Activated CD4-positive, alpha-beta T cell treated with anti-CD3 and anti-CD28 coated beads for 36 hours (primary cell): ENCODE measurements at regions of chr16 and their contacts with region 1.

Region 1: GRCh38 chr16:22297114-22297878 is at the start of gene POLR3E:
- DNase-seq: peak; percentile 100
- ATAC-seq: peak; percentile 87
- H3K4me3 Mint-ChIP-seq: peak within 1 kb of the TSS; percentile 93
- H3K27ac Mint-ChIP-seq: peak within 1 kb of the TSS; percentile 96
- H3K4me1 Mint-ChIP-seq: peaks cover 38% of the 10 kb centered on the region
- H3K27me3 Mint-ChIP-seq: no peaks in the 10 kb centered on the region
- total RNA-seq, gene POLR3E: 70.9 to 87.4 TPM

Region 2: DNA sequence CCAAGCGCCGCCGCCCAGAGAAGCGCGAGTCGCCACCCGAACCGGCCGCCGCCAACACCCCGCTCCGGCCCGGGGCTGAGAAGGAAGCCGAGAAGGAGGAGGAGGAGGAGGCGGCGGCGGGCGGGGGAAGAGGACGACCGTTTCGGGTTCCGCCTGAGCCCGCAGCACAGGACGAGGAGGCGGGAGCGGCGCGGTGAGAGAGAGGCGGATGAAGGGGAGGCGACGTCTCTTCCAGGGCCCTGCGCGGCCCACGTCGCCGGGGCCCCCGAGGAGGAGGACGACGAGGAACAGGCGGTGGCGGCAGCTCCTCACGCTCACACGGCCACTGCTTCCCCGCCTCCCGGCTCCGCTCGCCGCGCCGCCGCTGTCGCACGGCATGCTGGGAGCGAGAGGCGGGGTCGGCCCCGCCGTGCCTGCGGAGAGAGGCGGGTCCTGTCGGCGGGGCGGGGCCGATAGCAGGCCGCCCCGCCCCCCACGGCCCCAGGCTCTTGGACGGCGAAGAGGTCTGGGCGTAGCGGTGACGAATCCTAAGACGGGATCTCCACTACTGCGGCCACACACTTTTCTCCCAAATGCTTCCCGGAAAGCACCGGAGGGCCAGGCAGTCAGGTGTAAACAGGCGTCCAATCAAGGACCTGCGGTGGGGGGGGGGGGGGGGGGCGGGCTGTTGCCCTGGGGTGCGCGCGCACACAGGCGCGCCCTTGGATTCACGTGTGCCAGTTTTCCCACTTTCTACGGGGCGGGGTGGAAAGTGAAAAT is 795.2 kb before region 1 on chr16:
- CTCF ChIA-PET with region 1: no interaction called
- POLR2A ChIA-PET with region 1: no interaction called
- intact Hi-C with region 1: loop called in 1 of 2 experiments (anchors 10 kb)
- DNase-seq: peak; percentile 97
- ATAC-seq: peak; percentile 75
- H3K4me3 Mint-ChIP-seq: peak overlapping the region; percentile 83
- H3K27ac Mint-ChIP-seq: peak overlapping the region; percentile 93
- H3K4me1 Mint-ChIP-seq: peaks cover 24% of the 10 kb centered on the region
- H3K27me3 Mint-ChIP-seq: no peaks in the 10 kb centered on the region

Region 3: GRCh38 chr16:21952793-21953540 is 344.3 kb before region 1 on chr16 and contains the start of gene UQCRC2:
- CTCF ChIA-PET with region 1: interaction called, 6 read pairs
- POLR2A ChIA-PET with region 1: no interaction called
- intact Hi-C with region 1: loop called in 1 of 2 experiments (anchors 1 kb)
- DNase-seq: peak; percentile 92
- ATAC-seq: peak; percentile 93
- H3K4me3 Mint-ChIP-seq: peak within 1 kb of the TSS; percentile 98
- H3K27ac Mint-ChIP-seq: peak within 1 kb of the TSS; percentile 100
- H3K4me1 Mint-ChIP-seq: peaks cover 58% of the 10 kb centered on the region
- H3K27me3 Mint-ChIP-seq: no peaks in the 10 kb centered on the region
- total RNA-seq, gene UQCRC2: 321 to 367 TPM

Region 4: DNA sequence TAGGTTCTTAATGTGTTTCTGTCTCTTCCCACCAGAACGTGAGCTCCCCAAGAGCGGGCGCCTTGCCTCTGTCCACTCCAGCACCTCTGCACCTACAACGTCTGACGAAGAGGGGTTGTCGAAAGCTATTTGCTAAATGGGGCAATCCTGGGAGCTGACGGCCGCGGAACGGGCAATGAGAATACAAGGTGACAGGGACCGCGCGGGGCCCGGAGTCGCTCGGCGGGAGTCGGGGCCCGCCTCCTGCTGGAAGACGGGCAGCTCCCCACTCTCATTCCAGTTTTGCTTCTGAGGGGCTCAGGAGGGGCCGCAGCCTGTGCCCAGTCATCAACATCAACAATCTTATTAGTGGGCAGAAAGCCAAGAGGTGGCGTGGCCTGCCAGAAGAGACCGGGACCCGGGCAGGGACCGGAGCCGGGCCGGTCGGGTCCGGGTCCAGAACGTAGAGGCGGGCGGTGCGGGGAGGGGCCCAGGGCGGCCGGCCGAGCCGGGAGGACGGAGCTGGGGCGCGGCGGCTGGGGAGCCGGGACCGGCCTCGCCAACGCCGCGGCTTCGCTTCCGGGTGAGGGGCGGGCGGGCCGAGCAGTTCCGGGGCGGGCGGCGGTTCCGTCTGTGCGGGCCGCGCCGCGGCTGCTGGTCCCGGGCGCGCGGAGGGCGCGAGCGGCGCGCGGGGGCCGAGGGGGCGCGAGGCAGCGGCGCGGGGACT is 289.6 kb before region 1 on chr16 and contains the start of gene MOSMO:
- CTCF ChIA-PET with region 1: interaction called, 3 read pairs
- POLR2A ChIA-PET with region 1: interaction called, 5 read pairs
- intact Hi-C with region 1: loop called (anchors 2 kb)
- DNase-seq: peak; percentile 81
- ATAC-seq: peak; percentile 89
- H3K4me3 Mint-ChIP-seq: peak within 1 kb of the TSS; percentile 84
- H3K27ac Mint-ChIP-seq: peak within 1 kb of the TSS; percentile 79
- H3K4me1 Mint-ChIP-seq: peaks cover 42% of the 10 kb centered on the region
- H3K27me3 Mint-ChIP-seq: no peaks in the 10 kb centered on the region
- total RNA-seq, gene MOSMO: 7.7 to 8.0 TPM

Region 5: GRCh38 chr16:22098405-22099255 is 198.7 kb before region 1 on chr16:
- CTCF ChIA-PET with region 1: no interaction called
- POLR2A ChIA-PET with region 1: no interaction called
- intact Hi-C with region 1: loop called in 1 of 2 experiments (anchors 2 kb)
- DNase-seq: peak; percentile 13
- ATAC-seq: peak; percentile 87
- H3K4me3 Mint-ChIP-seq: no peak overlapping the region
- H3K27ac Mint-ChIP-seq: no peak overlapping the region
- H3K4me1 Mint-ChIP-seq: no peaks in the 10 kb centered on the region
- H3K27me3 Mint-ChIP-seq: peaks cover 6% of the 10 kb centered on the region

Region 6: DNA sequence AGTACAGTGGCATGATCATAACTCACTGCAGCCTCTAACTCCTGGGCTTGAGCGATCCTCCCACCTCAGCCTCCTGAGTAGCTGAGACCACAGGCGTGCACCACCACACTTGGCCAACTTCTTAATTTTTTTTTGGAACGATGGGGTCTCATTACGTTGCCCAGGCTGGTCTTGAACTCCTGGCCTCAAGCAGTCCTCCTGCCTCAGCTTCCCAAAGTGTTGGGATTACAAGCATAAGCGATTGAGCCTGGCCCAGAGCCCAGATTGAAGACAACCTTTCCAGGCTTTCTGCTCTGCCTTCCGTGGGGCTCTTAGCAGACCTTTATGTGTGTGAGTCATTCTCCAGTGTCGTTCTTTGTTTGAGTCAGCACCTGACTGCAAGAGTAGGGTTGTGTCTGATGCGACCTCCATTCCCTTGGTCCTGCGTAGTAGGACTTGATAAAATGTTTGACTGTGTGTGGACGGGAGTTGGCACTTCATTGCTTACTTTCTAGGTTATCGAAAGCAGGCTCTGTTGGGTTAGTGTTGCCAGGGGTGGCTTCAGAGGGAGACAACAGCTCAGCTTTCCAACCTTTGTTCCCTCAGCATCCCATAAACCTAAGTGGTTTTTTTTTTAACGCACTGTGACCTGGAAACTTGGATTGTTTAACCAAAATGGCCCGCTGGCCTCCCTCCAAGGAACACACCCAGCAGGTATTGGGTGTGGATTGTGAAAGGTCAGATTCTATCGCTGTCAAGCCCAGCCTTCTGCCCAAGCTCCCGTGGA is 64.8 kb before region 1 on chr16:
- CTCF ChIA-PET with region 1: no interaction called
- POLR2A ChIA-PET with region 1: no interaction called
- intact Hi-C with region 1: loop called in 1 of 2 experiments (anchors 2 kb)
- DNase-seq: peak; percentile 68
- ATAC-seq: peak; percentile 100
- H3K4me3 Mint-ChIP-seq: no peak overlapping the region
- H3K27ac Mint-ChIP-seq: peak overlapping the region; percentile 51
- H3K4me1 Mint-ChIP-seq: peaks cover 11% of the 10 kb centered on the region
- H3K27me3 Mint-ChIP-seq: no peaks in the 10 kb centered on the region

Region 7: DNA sequence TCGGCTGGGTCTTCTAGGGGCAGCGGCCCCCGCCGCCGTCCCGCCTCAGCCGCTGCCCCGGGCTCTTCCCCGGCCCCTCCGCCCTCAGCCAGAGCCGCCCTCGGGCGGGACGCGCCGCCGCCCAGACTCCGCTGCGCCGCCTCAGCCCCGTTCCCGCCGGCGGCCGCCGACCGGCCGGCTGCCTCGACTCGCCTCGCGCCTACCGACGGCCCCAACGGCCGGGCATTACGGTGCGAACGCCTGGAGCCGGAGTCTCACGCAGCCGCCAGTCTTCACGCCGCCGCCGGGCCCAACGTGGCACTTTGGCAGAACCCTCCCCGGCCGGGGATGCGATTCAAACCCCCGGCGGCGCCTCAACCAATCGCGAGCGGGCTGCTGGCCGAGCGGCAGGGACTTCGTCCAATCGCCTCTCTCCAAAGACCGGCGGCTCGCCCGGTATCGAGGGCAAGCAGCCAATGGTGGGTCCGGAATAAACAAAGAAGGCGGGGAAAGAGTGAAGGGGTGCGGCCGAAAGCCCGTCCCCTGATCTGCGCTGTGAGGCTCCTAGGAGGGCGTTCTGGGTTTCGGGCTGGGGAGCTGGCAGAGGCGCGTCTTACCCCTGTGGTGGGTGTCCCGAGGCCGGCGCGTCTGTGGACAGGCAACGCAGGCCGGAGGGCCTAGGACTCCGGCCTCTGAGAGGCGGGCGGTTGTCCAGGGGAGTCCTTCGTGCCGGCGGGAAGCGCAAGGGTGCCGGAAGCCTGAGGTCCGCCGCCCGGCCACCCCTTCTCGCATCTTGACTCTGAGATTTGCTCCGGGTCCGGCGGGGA is 77.2 kb after region 1 on chr16 and contains the start of gene CDR2:
- CTCF ChIA-PET with region 1: no interaction called
- POLR2A ChIA-PET with region 1: no interaction called
- intact Hi-C with region 1: loop called (anchors 1 to 5 kb)
- DNase-seq: peak; percentile 99
- ATAC-seq: peak; percentile 95
- H3K4me3 Mint-ChIP-seq: peak within 1 kb of the TSS; percentile 97
- H3K27ac Mint-ChIP-seq: peak within 1 kb of the TSS; percentile 95
- H3K4me1 Mint-ChIP-seq: peaks cover 38% of the 10 kb centered on the region
- H3K27me3 Mint-ChIP-seq: no peaks in the 10 kb centered on the region
- total RNA-seq, gene CDR2: 29.5 to 33.7 TPM